ENCODE measurements at regions of chr17 and their contacts with region 1.

Region 1: DNA sequence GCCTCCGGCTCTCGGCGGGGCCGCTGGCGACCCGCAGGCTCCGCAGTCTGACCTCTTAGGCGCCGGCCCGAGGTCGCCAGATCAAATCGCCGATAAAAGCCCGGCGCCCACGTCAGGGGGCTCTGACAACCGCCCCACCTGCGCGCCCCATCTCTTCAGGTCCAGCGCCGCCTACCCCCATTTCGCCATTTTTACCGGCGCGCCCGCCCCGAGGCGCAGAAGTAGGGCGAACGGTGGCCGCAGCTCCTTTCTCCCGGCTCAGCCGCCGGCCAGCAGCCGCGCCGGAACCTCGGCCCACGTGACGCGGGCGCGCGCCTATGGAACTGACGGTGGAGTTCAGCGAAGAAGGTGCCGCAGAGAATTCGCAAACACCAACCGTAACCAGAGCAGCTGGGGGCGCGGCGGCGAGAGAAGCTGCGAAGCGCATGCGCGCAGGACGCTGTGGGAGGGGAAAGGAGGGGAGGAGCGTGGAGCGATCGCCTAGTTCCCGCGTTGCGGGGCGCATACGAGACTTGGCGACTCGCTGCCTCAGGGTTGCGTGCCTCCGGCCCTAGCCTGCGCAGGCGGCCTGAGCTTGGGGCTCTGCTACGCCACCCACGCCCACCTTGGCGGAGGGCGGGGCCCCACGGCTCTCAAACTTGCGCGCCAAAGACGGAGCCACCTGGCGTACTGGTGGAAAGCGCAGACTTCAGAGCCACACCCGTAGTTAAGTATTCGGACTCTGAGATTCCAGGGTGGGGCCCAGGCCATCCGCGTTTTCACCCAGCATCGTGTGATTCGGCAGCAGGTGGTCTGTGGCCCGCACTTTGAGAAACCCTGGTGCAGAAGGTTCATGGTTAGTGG is at the start of gene TRIM37:
- DNase-seq: peak; percentile 96 to 100 (median 99)
- ATAC-seq: peak; percentile 98
- H3K4me3 ChIP-seq: peak within 1 kb of the TSS; percentile 69
- H3K4me3 Mint-ChIP-seq: peak within 1 kb of the TSS; percentile 80 to 97 (median 94)
- H3K27ac ChIP-seq: peak within 1 kb of the TSS; percentile 83
- H3K27ac Mint-ChIP-seq: peak within 1 kb of the TSS; percentile 63 to 98 (median 90)
- H3K4me1 ChIP-seq: peaks cover 11 to 26% of the 10 kb centered on the region in 2 donors
- H3K4me1 Mint-ChIP-seq: peaks cover 15 to 57% (median 39%) of the 10 kb centered on the region in 7 donors
- H3K27me3 ChIP-seq: no peaks in the 10 kb centered on the region
- H3K27me3 Mint-ChIP-seq: no peaks in the 10 kb centered on the region
- total RNA-seq, gene TRIM37: 13.1 to 25.2 (median 22.4) TPM

Region 2: DNA sequence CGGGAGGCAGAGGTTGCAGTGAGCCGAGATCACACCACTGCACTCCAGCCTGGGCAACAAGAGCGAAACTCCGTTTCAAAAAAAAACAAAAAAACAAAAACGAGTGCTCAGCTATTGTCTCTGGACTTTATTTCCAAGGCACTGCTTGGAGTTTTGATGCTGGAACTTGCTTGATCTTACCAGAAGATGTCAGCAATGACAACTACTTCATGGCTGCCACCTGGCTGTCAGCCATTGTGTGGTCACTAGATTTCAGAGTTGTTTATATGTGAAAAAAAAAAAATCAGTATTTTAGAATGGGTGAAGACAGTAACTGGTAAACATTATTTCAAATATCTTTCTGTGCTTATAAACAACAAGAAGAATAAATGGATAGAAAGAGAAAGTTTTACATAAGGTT is 984.8 kb before region 1 on chr17:
- CTCF ChIA-PET with region 1: no interaction called
- POLR2A ChIA-PET with region 1: no interaction called
- intact Hi-C with region 1: no loop called
- DNase-seq: peak in 7 of 9 donors; percentile 36 to 70 (median 56)
- ATAC-seq: peak; percentile 81
- H3K4me3 ChIP-seq: no peak overlapping the region
- H3K4me3 Mint-ChIP-seq: peak overlapping the region in 2 of 10 donors; percentile 27 to 33
- H3K27ac ChIP-seq: no peak overlapping the region
- H3K27ac Mint-ChIP-seq: peak overlapping the region in 4 of 9 donors; percentile 10 to 32 (median 12)
- H3K4me1 ChIP-seq: peaks cover 5 to 8% of the 10 kb centered on the region in 2 donors
- H3K4me1 Mint-ChIP-seq: peaks cover 2 to 28% (median 14%) of the 10 kb centered on the region in 7 donors
- H3K27me3 ChIP-seq: no peaks in the 10 kb centered on the region
- H3K27me3 Mint-ChIP-seq: peaks cover 5 to 32% (median 7%) of the 10 kb centered on the region in 5 donors

Region 3: DNA sequence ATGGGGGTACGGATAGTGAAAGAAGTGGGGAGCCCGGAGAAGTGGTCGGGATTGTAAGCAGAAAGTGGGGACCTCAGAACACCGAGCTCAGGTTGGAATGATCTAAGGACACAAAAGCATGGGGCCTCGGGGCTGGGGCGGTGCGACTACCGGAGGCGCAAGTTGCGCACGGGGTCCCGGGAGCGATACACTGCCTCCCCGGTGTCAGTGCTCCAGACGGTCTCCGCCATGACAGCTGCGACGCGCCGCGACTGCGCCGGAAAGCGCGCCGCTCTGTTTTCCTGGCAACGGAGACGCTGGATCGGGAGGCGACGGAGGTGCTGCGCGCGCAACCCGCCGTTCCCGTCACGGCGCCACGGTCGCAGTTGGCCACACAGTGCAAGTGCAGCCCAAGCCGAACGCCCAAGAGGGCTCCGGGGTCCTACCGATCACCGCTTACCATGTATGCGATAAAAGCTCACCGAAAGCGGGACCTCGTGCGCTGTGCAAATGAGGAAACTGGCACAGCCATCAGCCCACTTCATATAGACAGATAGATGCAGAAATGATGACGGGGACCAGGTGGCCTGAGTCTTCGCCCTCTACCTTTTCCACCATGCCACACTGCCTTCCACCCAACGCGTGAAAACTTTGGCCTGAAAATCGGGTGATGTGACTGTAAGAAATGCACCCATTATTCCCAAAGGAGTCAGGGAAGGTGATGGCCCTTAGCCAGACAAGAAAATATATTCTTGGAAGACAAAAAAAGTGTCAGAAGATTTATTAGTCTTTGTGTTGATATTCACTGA is 887.5 kb before region 1 on chr17 and contains the start of gene MKS1:
- CTCF ChIA-PET with region 1: no interaction called
- POLR2A ChIA-PET with region 1: no interaction called
- intact Hi-C with region 1: loop called in 1 of 2 experiments (anchors 1 kb)
- DNase-seq: peak; percentile 90 to 96 (median 94)
- ATAC-seq: peak; percentile 98
- H3K4me3 ChIP-seq: peak within 1 kb of the TSS; percentile 68
- H3K4me3 Mint-ChIP-seq: peak within 1 kb of the TSS; percentile 86 to 96 (median 94)
- H3K27ac ChIP-seq: peak within 1 kb of the TSS; percentile 77
- H3K27ac Mint-ChIP-seq: peak within 1 kb of the TSS; percentile 92 to 98 (median 97)
- H3K4me1 ChIP-seq: peaks cover 8 to 9% of the 10 kb centered on the region in 2 donors
- H3K4me1 Mint-ChIP-seq: peaks cover 7 to 33% (median 23%) of the 10 kb centered on the region in 7 donors
- H3K27me3 ChIP-seq: no peaks in the 10 kb centered on the region
- H3K27me3 Mint-ChIP-seq: peaks cover 0 to 18% (median 0%) of the 10 kb centered on the region in 5 donors
- total RNA-seq, gene MKS1: 10.0 to 29.1 (median 19.7) TPM

Region 4: DNA sequence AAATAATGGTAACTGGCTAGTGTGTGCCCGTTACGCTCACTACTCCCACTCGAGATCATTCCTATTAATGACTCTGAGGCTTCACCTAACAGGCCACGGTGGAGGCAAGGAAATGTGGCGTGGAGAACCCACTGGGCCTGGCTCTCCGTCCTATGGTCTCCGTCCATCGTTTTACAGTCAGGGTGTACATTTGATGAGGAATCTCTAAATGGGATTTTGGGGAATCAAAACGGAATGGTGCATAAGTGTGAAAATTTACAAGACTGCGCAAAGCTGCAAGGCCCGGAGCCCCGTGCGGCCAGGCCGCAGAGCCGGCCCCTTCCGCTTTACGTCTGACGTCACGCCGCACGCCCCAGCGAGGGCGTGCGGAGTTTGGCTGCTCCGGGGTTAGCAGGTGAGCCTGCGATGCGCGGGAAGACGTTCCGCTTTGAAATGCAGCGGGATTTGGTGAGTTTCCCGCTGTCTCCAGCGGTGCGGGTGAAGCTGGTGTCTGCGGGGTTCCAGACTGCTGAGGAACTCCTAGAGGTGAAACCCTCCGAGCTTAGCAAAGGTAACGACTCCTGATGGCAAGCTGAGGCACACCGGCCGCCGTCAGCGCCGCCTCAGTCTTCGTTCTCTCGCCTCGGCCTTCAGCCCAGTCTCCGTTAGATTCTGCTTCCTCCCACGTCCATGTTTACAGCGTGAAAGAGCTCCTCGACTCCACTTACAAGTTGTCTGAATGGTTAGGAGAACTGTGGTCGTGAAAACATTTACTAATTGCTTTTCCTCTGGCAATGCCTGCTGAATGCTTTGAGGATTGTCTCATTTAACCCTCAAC is 414.2 kb before region 1 on chr17 and contains the start of gene RAD51C:
- CTCF ChIA-PET with region 1: no interaction called
- POLR2A ChIA-PET with region 1: no interaction called
- intact Hi-C with region 1: loop called in 1 of 2 experiments (anchors 5 kb)
- DNase-seq: peak; percentile 66 to 86 (median 82)
- ATAC-seq: peak; percentile 99
- H3K4me3 ChIP-seq: peak within 1 kb of the TSS; percentile 75
- H3K4me3 Mint-ChIP-seq: peak within 1 kb of the TSS; percentile 85 to 99 (median 94)
- H3K27ac ChIP-seq: peak within 1 kb of the TSS; percentile 77
- H3K27ac Mint-ChIP-seq: peak within 1 kb of the TSS; percentile 87 to 96 (median 89)
- H3K4me1 ChIP-seq: peaks cover 12 to 17% of the 10 kb centered on the region in 2 donors
- H3K4me1 Mint-ChIP-seq: peaks cover 20 to 37% (median 31%) of the 10 kb centered on the region in 7 donors
- H3K27me3 ChIP-seq: no peaks in the 10 kb centered on the region
- H3K27me3 Mint-ChIP-seq: peaks cover 0 to 2% (median 0%) of the 10 kb centered on the region in 5 donors
- total RNA-seq, gene RAD51C: 11.4 to 52.6 (median 27.8) TPM

Region 5: DNA sequence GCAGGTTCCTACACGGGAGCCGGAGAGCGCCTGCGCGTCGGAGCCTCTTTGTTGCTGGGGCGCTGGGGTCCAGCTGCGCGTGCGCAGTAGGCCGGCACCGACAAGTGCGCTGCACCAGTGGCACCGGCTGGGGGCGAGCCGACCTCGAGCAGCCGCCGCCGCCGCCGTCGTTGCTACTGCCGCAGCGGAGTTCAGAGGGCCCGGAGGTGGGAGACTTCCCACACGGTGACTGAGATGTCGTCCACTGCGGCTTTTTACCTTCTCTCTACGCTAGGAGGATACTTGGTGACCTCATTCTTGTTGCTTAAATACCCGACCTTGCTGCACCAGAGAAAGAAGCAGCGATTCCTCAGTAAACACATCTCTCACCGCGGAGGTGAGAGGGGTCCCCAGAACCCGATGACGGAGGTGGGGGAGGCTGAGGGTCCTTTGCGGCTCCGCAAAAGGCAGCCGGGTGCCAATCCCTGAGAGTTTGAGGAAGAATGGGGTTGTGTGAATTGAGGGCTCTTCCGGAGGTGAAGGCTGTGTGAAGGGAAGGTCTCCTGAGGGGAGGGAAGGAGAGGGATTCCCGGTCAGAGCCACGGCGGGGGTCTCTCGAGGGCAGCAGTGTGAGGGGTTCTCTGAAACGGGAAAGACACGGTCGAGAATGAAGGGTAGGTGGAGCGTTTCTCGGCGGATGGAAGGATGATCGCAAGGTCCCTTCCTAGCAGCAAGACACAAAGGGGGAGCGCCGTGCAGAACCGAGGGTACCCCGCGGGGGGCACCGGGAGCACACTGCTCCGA is 113.9 kb after region 1 on chr17 and contains the start of gene GDPD1:
- CTCF ChIA-PET with region 1: no interaction called
- POLR2A ChIA-PET with region 1: no interaction called
- intact Hi-C with region 1: loop called (anchors 1 to 2 kb)
- DNase-seq: peak; percentile 95 to 98 (median 97)
- ATAC-seq: peak; percentile 100
- H3K4me3 ChIP-seq: peak within 1 kb of the TSS; percentile 99
- H3K4me3 Mint-ChIP-seq: peak within 1 kb of the TSS; percentile 94 to 100 (median 98)
- H3K27ac ChIP-seq: peak within 1 kb of the TSS; percentile 92
- H3K27ac Mint-ChIP-seq: peak within 1 kb of the TSS; percentile 94 to 100 (median 98)
- H3K4me1 ChIP-seq: peaks cover 5 to 9% of the 10 kb centered on the region in 2 donors
- H3K4me1 Mint-ChIP-seq: peaks cover 5 to 16% (median 14%) of the 10 kb centered on the region in 7 donors
- H3K27me3 ChIP-seq: no peaks in the 10 kb centered on the region
- H3K27me3 Mint-ChIP-seq: peaks cover 0 to 5% (median 0%) of the 10 kb centered on the region in 5 donors
- total RNA-seq, gene GDPD1: 2.4 to 6.0 (median 3.8) TPM

Region 6: GRCh38 chr17:59707114-59707970 is 600.7 kb after region 1 on chr17 and contains the starts of genes PTRH2 and VMP1:
- CTCF ChIA-PET with region 1: no interaction called
- POLR2A ChIA-PET with region 1: no interaction called
- intact Hi-C with region 1: loop called in 1 of 2 experiments (anchors 2 kb)
- DNase-seq: peak; percentile 72 to 94 (median 83)
- ATAC-seq: peak; percentile 96
- H3K4me3 ChIP-seq: peak within 1 kb of the TSS; percentile 90
- H3K4me3 Mint-ChIP-seq: peak within 1 kb of the TSS; percentile 97 to 100 (median 99)
- H3K27ac ChIP-seq: peak within 1 kb of the TSS; percentile 90
- H3K27ac Mint-ChIP-seq: peak within 1 kb of the TSS; percentile 96 to 100 (median 99)
- H3K4me1 ChIP-seq: peaks cover 26 to 28% of the 10 kb centered on the region in 2 donors
- H3K4me1 Mint-ChIP-seq: peaks cover 39 to 86% (median 68%) of the 10 kb centered on the region in 7 donors
- H3K27me3 ChIP-seq: no peaks in the 10 kb centered on the region
- H3K27me3 Mint-ChIP-seq: no peaks in the 10 kb centered on the region
- total RNA-seq, gene PTRH2: 6.1 to 24.1 (median 15.0) TPM
- total RNA-seq, gene VMP1: 70.3 to 370 (median 82.5) TPM

Region 7: DNA sequence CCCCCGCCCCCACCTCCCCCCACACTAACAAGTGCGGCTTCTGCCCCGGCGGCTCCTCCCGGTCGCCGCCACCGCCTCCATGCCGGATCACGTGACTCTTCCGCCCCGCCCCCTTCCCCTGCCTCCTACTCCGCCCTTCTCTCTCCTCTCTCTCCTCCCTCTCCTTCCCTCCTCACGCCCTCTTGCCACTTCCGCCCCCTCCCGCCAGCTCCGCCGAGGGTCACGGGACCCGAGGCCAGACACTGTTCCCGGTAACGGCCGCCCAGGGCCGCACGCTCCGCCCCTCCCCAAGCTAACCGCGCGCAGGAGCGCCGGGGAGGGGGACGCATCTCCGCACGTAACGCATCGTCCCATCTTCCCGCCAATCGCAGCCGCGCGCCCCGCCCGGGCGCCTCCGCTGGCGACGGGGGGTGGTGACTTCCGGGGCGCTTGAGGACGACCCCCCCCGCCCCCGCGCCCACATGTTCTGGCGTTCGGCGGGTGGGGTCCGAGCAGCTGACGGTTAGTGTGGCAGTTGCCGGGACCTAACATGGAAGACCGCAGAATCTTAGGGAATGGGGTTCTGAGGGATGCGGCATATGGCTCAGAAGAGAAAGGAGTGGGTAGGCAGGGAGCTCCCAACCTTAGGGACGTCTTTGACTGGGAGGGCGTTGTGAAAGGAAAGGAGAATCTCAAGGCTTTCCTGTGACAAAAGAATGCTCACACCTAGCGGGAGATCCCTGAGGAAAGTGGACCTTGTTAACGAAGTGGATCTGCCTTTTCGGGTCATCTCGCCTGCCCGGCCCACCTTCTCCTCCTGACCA is 1285.6 kb after region 1 on chr17 and contains the start of gene USP32:
- CTCF ChIA-PET with region 1: no interaction called
- POLR2A ChIA-PET with region 1: interaction called, 3 read pairs
- intact Hi-C with region 1: loop called in 1 of 2 experiments (anchors 1 kb)
- DNase-seq: peak; percentile 94 to 98 (median 96)
- ATAC-seq: peak; percentile 95
- H3K4me3 ChIP-seq: peak within 1 kb of the TSS; percentile 97
- H3K4me3 Mint-ChIP-seq: peak within 1 kb of the TSS; percentile 93 to 99 (median 96)
- H3K27ac ChIP-seq: peak within 1 kb of the TSS; percentile 92
- H3K27ac Mint-ChIP-seq: peak within 1 kb of the TSS; percentile 92 to 99 (median 97)
- H3K4me1 ChIP-seq: peaks cover 5 to 18% of the 10 kb centered on the region in 2 donors
- H3K4me1 Mint-ChIP-seq: peaks cover 30 to 55% (median 41%) of the 10 kb centered on the region in 7 donors
- H3K27me3 ChIP-seq: no peaks in the 10 kb centered on the region
- H3K27me3 Mint-ChIP-seq: no peaks in the 10 kb centered on the region
- total RNA-seq, gene USP32: 31.6 to 58.1 (median 35.4) TPM